Heart right ventricle (tissue), 16 donors: ENCODE measurements at regions of chr4 and their contacts with region 1.

Region 1: DNA sequence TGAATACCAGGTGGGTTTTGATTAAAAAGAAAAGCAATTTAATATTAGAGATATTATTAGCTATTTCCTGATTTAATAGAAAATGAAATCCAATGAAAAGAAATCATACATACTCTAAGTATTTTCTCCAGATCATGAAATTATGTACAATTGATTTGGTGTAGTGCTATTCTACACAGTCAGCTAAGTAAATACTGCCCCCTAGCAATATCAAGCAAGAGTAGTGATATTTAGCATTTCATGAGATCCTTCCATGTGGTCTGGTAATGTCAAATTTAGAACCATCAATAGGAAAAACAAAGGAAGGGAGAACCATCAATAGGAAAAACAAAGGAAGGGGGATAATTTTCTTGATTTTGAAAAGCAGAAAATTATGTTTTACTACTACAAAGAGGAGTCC is 114.6 kb downstream of the TBCK start:
- DNase-seq: no peak
- ATAC-seq: no peak
- H3K4me3 ChIP-seq: no peak overlapping the region
- H3K27ac ChIP-seq: no peak overlapping the region
- H3K4me1 ChIP-seq: no peaks in the 10 kb centered on the region
- H3K27me3 ChIP-seq: no peaks in the 10 kb centered on the region
- CTCF ChIP-seq: peak in 7 of 9 donors; percentile 27 to 61 (median 52)

Region 2: DNA sequence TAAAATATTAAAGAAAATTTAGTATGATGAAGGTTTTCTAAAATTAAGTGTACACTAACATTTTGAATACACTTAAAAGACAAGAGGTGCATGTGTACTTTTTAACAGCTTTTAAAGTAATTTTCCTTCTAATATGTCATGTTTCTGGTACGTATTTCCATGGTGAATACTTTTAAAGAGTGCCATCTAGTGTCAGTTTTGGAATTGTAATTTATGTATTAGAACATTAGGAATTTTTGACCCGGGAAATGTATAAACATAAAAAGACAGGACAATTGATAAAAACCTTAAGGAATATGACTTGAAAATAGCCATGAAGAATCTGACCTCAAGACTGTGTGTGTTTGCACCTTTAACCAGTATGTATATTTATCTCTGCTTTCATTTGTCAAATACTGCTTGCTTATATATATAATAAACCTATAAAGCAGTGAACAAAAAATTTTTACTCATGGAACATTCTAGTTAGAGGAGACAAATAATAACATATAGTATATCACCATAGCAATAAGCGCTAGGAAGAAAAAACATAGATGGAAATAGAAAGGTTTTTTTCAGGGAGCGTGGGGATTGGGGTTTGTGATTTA is 485.6 kb before region 1 on chr4:
- intact Hi-C with region 1: loop called in 2 of 10 experiments (anchors 10 kb)
- DNase-seq: no peak
- ATAC-seq: peak in 1 of 8 donors; percentile 45
- H3K4me3 ChIP-seq: peak overlapping the region in 2 of 10 donors; percentile 3 to 17
- H3K27ac ChIP-seq: no peak overlapping the region
- H3K4me1 ChIP-seq: peaks cover 0 to 20% (median 0%) of the 10 kb centered on the region in 9 donors
- H3K27me3 ChIP-seq: no peaks in the 10 kb centered on the region
- CTCF ChIP-seq: peak; percentile 31 to 77 (median 62)

Region 3: DNA sequence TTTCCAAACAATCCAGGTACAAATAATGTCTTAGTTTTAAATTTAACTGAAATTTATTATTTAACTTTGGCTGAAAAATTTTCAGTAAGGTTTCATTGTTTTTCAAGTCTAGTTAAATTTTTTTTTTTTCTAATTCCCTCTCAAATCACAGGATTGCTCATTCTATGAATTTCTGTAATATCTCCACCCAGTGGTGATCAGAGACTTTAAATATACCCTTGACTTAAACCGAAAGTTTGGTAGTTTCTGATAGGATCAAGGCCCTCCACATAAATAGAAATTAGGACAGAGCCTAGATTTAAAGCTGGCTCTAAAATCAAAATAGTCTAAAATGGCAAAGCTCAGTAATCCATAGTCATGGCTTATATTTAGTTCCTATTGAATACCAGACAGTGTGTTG is 60.8 kb before region 1 on chr4:
- intact Hi-C with region 1: no loop called
- DNase-seq: no peak
- ATAC-seq: no peak
- H3K4me3 ChIP-seq: no peak overlapping the region
- H3K27ac ChIP-seq: no peak overlapping the region
- H3K4me1 ChIP-seq: no peaks in the 10 kb centered on the region
- H3K27me3 ChIP-seq: no peaks in the 10 kb centered on the region
- CTCF ChIP-seq: peak in 2 of 9 donors; percentile 13 to 19